ENCODE measurements at regions of chr16 and their contacts with region 1.

Region 1: GRCh38 chr16:2486645-2487516 is 12.0 kb downstream of the TBC1D24 start:
- DNase-seq: peak; percentile 76 to 91 (median 80)
- H3K4me3 ChIP-seq: no peak overlapping the region
- H3K4me3 Mint-ChIP-seq: peak overlapping the region; percentile 23 to 68 (median 58)
- H3K27ac ChIP-seq: no peak overlapping the region
- H3K27ac Mint-ChIP-seq: peak overlapping the region; percentile 66 to 95 (median 89)
- H3K4me1 ChIP-seq: peaks cover 14% of the 10 kb centered on the region
- H3K4me1 Mint-ChIP-seq: peaks cover 9 to 19% (median 13%) of the 10 kb centered on the region in 4 donors
- H3K27me3 ChIP-seq: no peaks in the 10 kb centered on the region
- H3K27me3 Mint-ChIP-seq: no peaks in the 10 kb centered on the region

Region 2: DNA sequence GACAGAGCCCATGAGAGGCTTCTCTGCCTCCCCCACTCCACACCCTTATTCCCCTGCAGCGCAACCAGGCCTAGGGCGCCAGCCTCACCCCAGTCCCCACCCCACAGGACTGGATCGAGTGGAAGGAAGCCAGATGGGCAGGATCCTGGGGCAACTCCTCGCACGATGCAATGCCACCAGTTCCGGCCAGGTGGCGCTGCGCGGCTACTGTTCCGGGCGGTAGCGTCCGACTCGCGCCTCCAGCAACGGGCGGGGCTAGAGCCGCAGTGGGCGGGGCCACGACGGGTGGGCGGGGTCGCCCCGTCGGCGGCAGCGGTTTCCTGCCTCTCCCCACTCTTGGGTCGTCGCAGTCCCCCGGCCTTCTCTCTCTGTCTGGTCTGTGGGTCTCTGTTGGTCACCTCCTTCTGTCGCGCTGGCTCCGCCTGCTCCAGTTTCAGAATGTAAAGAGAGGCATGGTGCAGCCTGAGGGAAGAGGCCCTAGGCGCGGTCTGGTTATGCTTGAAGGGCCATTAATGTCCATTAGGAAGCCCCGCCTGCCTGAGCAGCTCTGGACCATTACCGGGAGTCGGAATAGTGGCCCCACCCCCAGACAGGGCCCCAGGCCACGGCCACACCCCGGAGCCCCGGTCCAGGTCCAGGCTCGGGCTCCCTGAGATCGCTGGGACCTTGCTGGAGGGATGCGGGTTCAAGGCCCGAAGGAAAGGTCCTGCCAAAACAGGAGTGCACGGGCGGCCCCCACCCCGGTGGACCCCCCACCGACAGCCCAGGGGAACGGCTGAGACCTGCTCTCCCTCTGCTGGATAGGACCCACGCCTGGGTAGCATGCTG is 463.6 kb before region 1 on chr16:
- CTCF ChIA-PET with region 1: no interaction called
- POLR2A ChIA-PET with region 1: no interaction called
- intact Hi-C with region 1: loop called (anchors 1 kb)
- DNase-seq: peak; percentile 89 to 95 (median 91)
- H3K4me3 ChIP-seq: peak overlapping the region in 1 of 2 donors; percentile 30
- H3K4me3 Mint-ChIP-seq: peak overlapping the region; percentile 6 to 76 (median 70)
- H3K27ac ChIP-seq: peak overlapping the region; percentile 44
- H3K27ac Mint-ChIP-seq: peak overlapping the region in 6 of 7 donors; percentile 60 to 91 (median 76)
- H3K4me1 ChIP-seq: peaks cover 29% of the 10 kb centered on the region
- H3K4me1 Mint-ChIP-seq: peaks cover 9 to 26% (median 17%) of the 10 kb centered on the region in 4 donors
- H3K27me3 ChIP-seq: peaks cover 12% of the 10 kb centered on the region
- H3K27me3 Mint-ChIP-seq: peaks cover 15 to 16% of the 10 kb centered on the region in 2 donors

Region 3: GRCh38 chr16:2340564-2341455 is 146.1 kb before region 1 on chr16 and contains the start of gene ABCA3:
- CTCF ChIA-PET with region 1: interaction called, 5 read pairs
- POLR2A ChIA-PET with region 1: no interaction called
- intact Hi-C with region 1: loop called (anchors 1 kb)
- DNase-seq: peak; percentile 85 to 96 (median 93)
- H3K4me3 ChIP-seq: peak within 1 kb of the TSS; percentile 1 to 45
- H3K4me3 Mint-ChIP-seq: peak within 1 kb of the TSS; percentile 84 to 88 (median 86)
- H3K27ac ChIP-seq: no peak within 1 kb of the TSS
- H3K27ac Mint-ChIP-seq: peak within 1 kb of the TSS in 6 of 7 donors; percentile 61 to 84 (median 77)
- H3K4me1 ChIP-seq: peaks cover 17% of the 10 kb centered on the region
- H3K4me1 Mint-ChIP-seq: peaks cover 9 to 26% (median 15%) of the 10 kb centered on the region in 4 donors
- H3K27me3 ChIP-seq: no peaks in the 10 kb centered on the region
- H3K27me3 Mint-ChIP-seq: peaks cover 2% of the 10 kb centered on the region in 2 donors
- total RNA-seq, gene ABCA3: 8.5 to 12.7 TPM

Region 4: DNA sequence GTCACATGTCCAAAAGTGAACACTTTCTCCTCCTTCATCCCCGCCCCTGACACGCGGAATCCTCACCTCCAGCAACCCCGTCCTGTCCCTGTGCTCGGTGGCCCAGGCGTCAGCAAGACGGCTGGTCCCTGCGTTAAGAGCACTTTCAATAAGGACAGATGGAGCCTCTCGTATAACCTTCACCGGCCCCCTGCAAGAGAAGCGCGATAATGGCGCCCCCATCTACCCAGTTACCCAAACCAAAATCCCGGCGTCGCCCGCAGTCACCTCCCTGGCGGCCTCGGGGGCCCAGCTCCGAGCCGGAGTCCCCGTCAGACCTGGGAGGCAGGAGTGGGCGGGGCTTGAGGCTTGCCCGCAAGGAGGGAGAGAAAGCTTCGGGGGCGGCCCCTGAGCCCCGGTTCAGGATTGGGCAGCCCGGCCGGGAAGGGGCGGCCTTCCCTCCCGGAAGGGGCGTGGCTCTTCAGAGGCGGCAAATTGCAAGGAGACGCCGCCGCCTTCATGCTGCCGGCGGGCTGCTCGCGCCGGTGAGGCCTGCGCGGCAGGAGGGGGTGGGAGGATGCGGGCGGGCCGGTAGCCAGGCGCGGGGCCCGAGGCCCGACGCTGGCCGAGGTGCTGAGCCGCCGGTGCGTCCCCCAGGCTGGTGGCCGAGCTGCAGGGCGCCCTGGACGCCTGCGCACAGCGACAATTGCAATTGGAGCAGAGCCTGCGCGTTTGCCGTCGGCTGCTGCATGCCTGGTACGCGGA is 27.1 kb before region 1 on chr16 and contains the start of gene TEDC2:
- CTCF ChIA-PET with region 1: no interaction called
- POLR2A ChIA-PET with region 1: no interaction called
- intact Hi-C with region 1: loop called (anchors 1 kb)
- DNase-seq: peak; percentile 94 to 97 (median 96)
- H3K4me3 ChIP-seq: peak within 1 kb of the TSS; percentile 42 to 56
- H3K4me3 Mint-ChIP-seq: peak within 1 kb of the TSS; percentile 86 to 93 (median 88)
- H3K27ac ChIP-seq: peak within 1 kb of the TSS; percentile 53
- H3K27ac Mint-ChIP-seq: peak within 1 kb of the TSS; percentile 38 to 90 (median 80)
- H3K4me1 ChIP-seq: peaks cover 14% of the 10 kb centered on the region
- H3K4me1 Mint-ChIP-seq: peaks cover 5 to 8% (median 6%) of the 10 kb centered on the region in 4 donors
- H3K27me3 ChIP-seq: no peaks in the 10 kb centered on the region
- H3K27me3 Mint-ChIP-seq: no peaks in the 10 kb centered on the region
- total RNA-seq, gene TEDC2: 0.44 to 0.55 TPM

Region 5: GRCh38 chr16:2513405-2514322 is 26.8 kb after region 1 on chr16 and contains the start of gene ATP6V0C:
- CTCF ChIA-PET with region 1: no interaction called
- POLR2A ChIA-PET with region 1: interaction called, 3 read pairs
- intact Hi-C with region 1: loop called (anchors 1 kb)
- DNase-seq: peak; percentile 90 to 97 (median 94)
- H3K4me3 ChIP-seq: peak within 1 kb of the TSS; percentile 74 to 77
- H3K4me3 Mint-ChIP-seq: peak within 1 kb of the TSS; percentile 90 to 96 (median 92)
- H3K27ac ChIP-seq: peak within 1 kb of the TSS; percentile 94
- H3K27ac Mint-ChIP-seq: peak within 1 kb of the TSS; percentile 91 to 98 (median 97)
- H3K4me1 ChIP-seq: peaks cover 48% of the 10 kb centered on the region
- H3K4me1 Mint-ChIP-seq: peaks cover 32 to 64% (median 46%) of the 10 kb centered on the region in 4 donors
- H3K27me3 ChIP-seq: no peaks in the 10 kb centered on the region
- H3K27me3 Mint-ChIP-seq: no peaks in the 10 kb centered on the region
- total RNA-seq, gene ATP6V0C: 125 to 129 TPM